Right ventricle myocardium superior (tissue), 1 donor: ENCODE measurements at regions of chr9 and their contacts with region 1.

Region 1: GRCh38 chr9:38527504-38527903 is 92.9 kb downstream of the ANKRD18A start:
- DNase-seq: no peak
- ATAC-seq: no peak

Region 2: DNA sequence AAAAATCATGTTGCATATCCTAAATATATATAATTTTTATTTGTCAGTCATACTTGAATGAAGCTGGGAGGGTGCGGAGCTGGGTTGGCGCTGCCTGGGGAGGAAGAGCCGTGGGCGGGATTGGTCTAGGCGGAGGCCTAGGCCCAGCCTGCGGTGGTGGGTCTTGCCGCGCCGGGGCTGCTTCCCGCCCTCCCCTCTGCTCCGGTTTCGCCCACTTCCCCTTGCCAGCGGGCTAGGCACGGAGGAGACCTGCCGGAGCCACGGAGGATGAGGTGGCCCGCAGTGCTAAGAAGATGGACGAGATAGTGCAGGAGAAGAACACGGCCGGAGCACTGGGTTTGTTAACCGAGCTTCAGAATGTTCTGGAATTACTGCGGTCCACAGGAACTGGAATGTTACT is 49.3 kb before region 1 on chr9:
- intact Hi-C with region 1: loop called (anchors 10 kb)
- DNase-seq: no peak
- ATAC-seq: no peak